ENCODE measurements at regions of chr3 and their contacts with region 1.

Region 1: GRCh38 chr3:34683851-34684250 is 885.4 kb downstream of the PDCD6IP start:
- DNase-seq: no peak
- ATAC-seq: no peak
- H3K4me3 Mint-ChIP-seq: no peak overlapping the region
- H3K27ac Mint-ChIP-seq: no peak overlapping the region
- H3K4me1 Mint-ChIP-seq: no peaks in the 10 kb centered on the region
- H3K27me3 Mint-ChIP-seq: no peaks in the 10 kb centered on the region
- CTCF ChIP-seq: no peak

Region 2: DNA sequence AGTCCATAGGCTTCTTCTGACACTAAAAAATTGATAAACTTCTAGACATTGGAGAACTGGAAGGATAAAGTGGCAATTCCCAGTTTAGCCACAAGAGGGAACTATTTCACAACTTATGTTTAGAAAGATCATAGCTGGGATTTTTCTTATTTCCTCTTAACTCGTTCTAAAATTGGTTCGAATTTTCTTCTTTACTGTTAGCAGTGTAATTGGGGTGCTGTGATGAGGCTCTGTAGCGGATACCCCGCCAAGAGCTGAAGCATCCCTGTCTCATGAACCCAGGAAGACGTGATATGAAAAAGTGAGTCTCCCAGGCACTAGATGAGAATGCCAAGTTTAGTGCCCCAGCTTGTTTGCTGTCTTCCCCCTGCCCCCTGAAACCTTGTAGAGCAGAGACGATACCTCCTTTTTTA is 800.3 kb before region 1 on chr3:
- CTCF ChIA-PET with region 1: interaction called, 45 read pairs
- POLR2A ChIA-PET with region 1: no interaction called
- intact Hi-C with region 1: no loop called
- DNase-seq: no peak
- ATAC-seq: no peak
- H3K4me3 Mint-ChIP-seq: no peak overlapping the region
- H3K27ac Mint-ChIP-seq: no peak overlapping the region
- H3K4me1 Mint-ChIP-seq: peaks cover 4% of the 10 kb centered on the region
- H3K27me3 Mint-ChIP-seq: peaks cover 3% of the 10 kb centered on the region
- CTCF ChIP-seq: peak; percentile 95

Region 3: DNA sequence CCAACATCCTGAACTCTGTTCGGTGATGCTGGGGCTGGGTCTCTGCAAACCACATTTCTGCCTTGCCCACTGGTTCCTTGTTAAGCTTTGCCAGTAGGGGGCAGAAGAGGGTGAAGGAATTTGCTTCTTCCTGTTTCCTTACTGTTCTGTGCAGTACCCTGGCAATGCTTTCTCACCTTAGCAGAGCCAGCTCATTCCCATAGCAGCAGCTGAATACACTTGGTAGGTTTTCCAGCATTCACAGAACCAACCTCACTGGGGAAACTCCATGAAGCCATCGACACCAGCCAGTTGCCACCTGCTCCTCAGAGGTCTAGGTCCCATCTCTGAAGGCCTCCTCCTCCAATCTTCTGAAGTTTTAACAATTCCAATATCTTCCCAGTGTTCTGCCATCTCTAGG is 577.0 kb before region 1 on chr3:
- CTCF ChIA-PET with region 1: no interaction called
- POLR2A ChIA-PET with region 1: no interaction called
- intact Hi-C with region 1: loop called (anchors 2 kb)
- DNase-seq: no peak
- ATAC-seq: no peak
- H3K4me3 Mint-ChIP-seq: no peak overlapping the region
- H3K27ac Mint-ChIP-seq: no peak overlapping the region
- H3K4me1 Mint-ChIP-seq: peaks cover 31% of the 10 kb centered on the region
- H3K27me3 Mint-ChIP-seq: no peaks in the 10 kb centered on the region
- CTCF ChIP-seq: no peak

Region 4: DNA sequence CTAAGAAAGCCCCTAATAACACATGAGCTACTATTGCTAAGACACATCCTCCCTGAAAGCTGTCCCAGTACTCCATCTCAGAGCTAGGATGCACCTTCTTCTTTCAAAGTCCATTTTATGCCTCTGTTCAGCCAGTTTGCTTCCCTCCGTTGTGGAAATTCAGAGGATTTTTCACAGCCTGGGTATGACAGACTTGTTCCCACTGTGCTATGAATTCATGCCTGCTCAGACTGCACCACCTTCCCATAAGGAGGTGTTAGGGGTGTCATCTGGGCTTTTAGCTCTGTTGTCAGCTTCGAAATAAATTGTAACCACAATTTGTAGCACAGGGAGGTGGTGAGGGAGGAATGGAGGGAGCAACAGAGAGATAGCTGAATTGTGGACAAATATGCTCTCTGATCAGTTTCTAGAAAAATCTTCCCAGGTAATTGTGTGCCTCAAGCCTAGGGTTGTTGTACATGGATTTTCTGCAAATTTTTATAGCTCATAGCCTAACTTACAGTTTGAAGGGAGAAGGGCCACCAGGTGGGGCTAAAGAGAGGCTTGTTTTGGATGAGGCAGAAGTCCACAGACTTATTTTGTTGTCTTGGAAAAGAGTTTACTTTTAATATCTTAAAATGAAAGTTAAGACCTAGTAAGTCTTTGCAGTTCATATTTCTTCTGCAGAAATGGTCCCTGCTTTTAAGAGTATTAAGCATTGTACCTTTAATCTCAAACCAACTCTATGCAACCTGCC is 423.4 kb before region 1 on chr3:
- CTCF ChIA-PET with region 1: interaction called, 5 read pairs
- POLR2A ChIA-PET with region 1: no interaction called
- intact Hi-C with region 1: loop called (anchors 5 kb)
- DNase-seq: no peak
- ATAC-seq: no peak
- H3K4me3 Mint-ChIP-seq: no peak overlapping the region
- H3K27ac Mint-ChIP-seq: no peak overlapping the region
- H3K4me1 Mint-ChIP-seq: peaks cover 17% of the 10 kb centered on the region
- H3K27me3 Mint-ChIP-seq: no peaks in the 10 kb centered on the region
- CTCF ChIP-seq: no peak